MCF 10A (cell line): ENCODE measurements at regions of chr7 and their contacts with region 1.

Region 1: GRCh38 chr7:48109848-48110663 is 21.0 kb downstream of the UPP1 start:
- DNase-seq: peak; percentile 78
- H3K4me3 Mint-ChIP-seq: no peak overlapping the region
- H3K27ac Mint-ChIP-seq: no peak overlapping the region
- H3K4me1 Mint-ChIP-seq: peaks cover 22% of the 10 kb centered on the region
- H3K27me3 Mint-ChIP-seq: no peaks in the 10 kb centered on the region
- CTCF ChIP-seq: peak; percentile 97

Region 2: GRCh38 chr7:47513741-47514241 is 596.3 kb before region 1 on chr7:
- CTCF ChIA-PET with region 1: no interaction called
- POLR2A ChIA-PET with region 1: no interaction called
- intact Hi-C with region 1: no loop called
- DNase-seq: no peak
- H3K4me3 Mint-ChIP-seq: no peak overlapping the region
- H3K27ac Mint-ChIP-seq: no peak overlapping the region
- H3K4me1 Mint-ChIP-seq: no peaks in the 10 kb centered on the region
- H3K27me3 Mint-ChIP-seq: no peaks in the 10 kb centered on the region
- CTCF ChIP-seq: no peak

Region 3: DNA sequence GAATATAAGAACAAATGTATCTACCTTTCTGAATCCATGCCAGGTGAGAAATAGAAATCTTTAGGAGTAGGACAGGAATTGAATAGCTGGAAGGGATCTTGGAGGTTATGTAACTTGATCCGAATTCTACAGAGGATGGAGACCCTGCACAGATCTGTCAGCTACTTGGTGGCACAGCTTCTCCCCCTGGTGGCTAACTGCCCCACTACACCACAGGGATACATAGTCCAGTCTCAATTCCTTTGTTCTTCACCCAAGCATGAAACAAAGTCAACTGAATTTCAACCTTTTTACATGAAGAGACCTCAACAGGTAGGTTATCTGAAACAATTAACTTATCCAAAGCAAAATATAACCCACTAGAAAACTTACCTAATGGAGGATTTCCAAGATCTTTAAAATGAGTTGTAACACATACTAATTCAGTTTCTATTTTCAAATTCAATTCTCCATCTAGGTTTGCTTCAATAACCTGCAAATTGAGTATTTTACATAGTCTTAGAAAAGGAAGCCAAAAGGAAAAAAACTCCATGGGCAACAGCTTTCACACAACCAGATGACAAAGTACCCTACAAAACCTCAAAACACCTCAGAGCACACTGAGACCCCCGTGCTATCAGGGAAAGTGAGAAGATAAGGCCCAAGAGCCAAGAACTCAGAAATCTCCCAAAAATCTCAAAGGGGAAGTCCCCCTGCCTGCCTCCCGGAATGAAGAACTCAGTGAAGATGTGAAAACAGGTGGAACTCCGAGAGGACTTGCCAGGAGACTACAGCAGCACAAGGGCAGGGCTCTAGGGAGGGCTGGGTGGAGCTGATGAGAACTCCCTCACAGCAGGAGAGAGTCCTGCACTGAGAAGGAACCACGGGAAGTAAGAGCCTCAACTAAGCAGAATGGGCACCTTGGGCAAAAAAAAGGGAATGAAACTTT is 140.9 kb before region 1 on chr7:
- CTCF ChIA-PET with region 1: interaction called, 23 read pairs
- POLR2A ChIA-PET with region 1: no interaction called
- intact Hi-C with region 1: no loop called
- DNase-seq: peak; percentile 60
- H3K4me3 Mint-ChIP-seq: no peak overlapping the region
- H3K27ac Mint-ChIP-seq: no peak overlapping the region
- H3K4me1 Mint-ChIP-seq: peaks cover 2% of the 10 kb centered on the region
- H3K27me3 Mint-ChIP-seq: no peaks in the 10 kb centered on the region
- CTCF ChIP-seq: peak; percentile 80

Region 4: DNA sequence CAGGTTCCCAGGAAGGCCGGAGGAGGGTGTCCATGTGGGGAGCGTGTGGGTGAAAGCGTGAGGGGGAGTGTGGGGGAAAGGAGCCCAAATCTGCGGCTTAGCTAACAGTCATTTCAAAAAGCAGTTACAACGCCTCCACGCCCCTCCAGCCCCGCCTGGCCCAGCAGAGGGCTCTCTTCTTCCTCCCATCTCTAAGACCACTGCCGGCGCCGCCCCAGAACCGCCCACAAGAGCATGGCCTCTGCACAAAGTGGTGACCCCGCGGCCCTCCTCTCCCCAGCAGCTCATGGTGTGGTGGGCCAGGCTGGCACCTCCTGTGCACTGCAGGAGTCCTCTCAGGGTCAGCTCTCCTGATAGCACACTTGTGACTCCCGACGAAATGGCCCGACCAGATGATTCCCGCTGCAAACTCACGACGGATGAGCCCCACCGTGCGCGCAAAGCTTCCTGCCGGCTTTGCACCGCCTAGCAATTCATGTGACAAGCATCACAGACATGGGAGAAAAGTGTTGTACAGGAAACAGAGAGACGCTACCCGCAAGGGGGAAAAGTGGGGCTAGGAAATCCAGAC is 118.2 kb before region 1 on chr7:
- CTCF ChIA-PET with region 1: interaction called, 14 read pairs
- POLR2A ChIA-PET with region 1: no interaction called
- intact Hi-C with region 1: loop called (anchors 1 kb)
- DNase-seq: peak; percentile 66
- H3K4me3 Mint-ChIP-seq: no peak overlapping the region
- H3K27ac Mint-ChIP-seq: no peak overlapping the region
- H3K4me1 Mint-ChIP-seq: no peaks in the 10 kb centered on the region
- H3K27me3 Mint-ChIP-seq: no peaks in the 10 kb centered on the region
- CTCF ChIP-seq: peak; percentile 48

Region 5: GRCh38 chr7:48049850-48050249 is 60.2 kb before region 1 on chr7:
- CTCF ChIA-PET with region 1: no interaction called
- POLR2A ChIA-PET with region 1: no interaction called
- intact Hi-C with region 1: no loop called
- DNase-seq: no peak
- H3K4me3 Mint-ChIP-seq: no peak overlapping the region
- H3K27ac Mint-ChIP-seq: no peak overlapping the region
- H3K4me1 Mint-ChIP-seq: peaks cover 8% of the 10 kb centered on the region
- H3K27me3 Mint-ChIP-seq: no peaks in the 10 kb centered on the region
- CTCF ChIP-seq: no peak

Region 6: GRCh38 chr7:48083114-48083830 is 26.8 kb before region 1 on chr7:
- CTCF ChIA-PET with region 1: interaction called, 11 read pairs
- POLR2A ChIA-PET with region 1: interaction called, 10 read pairs
- intact Hi-C with region 1: no loop called
- DNase-seq: peak; percentile 50
- H3K4me3 Mint-ChIP-seq: no peak overlapping the region
- H3K27ac Mint-ChIP-seq: no peak overlapping the region
- H3K4me1 Mint-ChIP-seq: peaks cover 50% of the 10 kb centered on the region
- H3K27me3 Mint-ChIP-seq: no peaks in the 10 kb centered on the region
- CTCF ChIP-seq: no peak

Region 7: GRCh38 chr7:48094751-48095562 is 15.1 kb before region 1 on chr7:
- CTCF ChIA-PET with region 1: interaction called, 26 read pairs
- POLR2A ChIA-PET with region 1: interaction called, 6 read pairs
- intact Hi-C with region 1: no loop called
- DNase-seq: peak; percentile 42
- H3K4me3 Mint-ChIP-seq: peak overlapping the region; percentile 17
- H3K27ac Mint-ChIP-seq: peak overlapping the region; percentile 87
- H3K4me1 Mint-ChIP-seq: peaks cover 63% of the 10 kb centered on the region
- H3K27me3 Mint-ChIP-seq: no peaks in the 10 kb centered on the region
- CTCF ChIP-seq: no peak

Region 8: DNA sequence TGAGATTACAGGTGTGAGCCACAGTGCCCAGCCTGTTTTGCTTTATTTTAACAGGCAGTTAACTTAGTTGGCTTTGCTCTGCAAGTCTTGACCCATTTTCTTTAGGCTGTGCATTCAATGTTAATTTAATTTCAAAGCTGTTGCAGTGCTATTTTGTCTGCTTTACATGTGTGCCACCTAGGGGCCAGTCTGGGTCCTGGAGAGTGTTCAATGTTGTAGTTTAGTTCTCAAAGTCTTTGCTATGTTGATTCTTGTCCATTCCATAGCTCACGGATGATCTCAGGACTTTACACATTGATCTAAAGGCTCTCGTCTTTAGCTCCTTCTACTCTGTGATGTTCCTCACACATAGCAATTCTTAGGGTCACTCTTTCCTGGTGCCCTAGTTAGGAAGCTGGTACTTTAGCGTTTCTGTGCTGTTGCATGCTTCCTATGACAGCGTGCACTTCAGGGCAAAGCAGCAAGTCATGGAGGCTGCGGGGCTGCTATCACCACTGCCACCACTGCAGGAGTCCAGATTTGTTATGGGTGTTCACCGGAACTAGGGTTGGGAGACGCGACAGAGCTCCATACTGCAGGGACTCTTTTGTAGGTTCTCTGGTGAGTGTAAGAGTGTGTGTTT is 44.8 kb after region 1 on chr7:
- CTCF ChIA-PET with region 1: interaction called, 14 read pairs
- POLR2A ChIA-PET with region 1: interaction called, 3 read pairs
- intact Hi-C with region 1: loop called (anchors 1 kb)
- DNase-seq: peak; percentile 59
- H3K4me3 Mint-ChIP-seq: no peak overlapping the region
- H3K27ac Mint-ChIP-seq: no peak overlapping the region
- H3K4me1 Mint-ChIP-seq: no peaks in the 10 kb centered on the region
- H3K27me3 Mint-ChIP-seq: peaks cover 47% of the 10 kb centered on the region
- CTCF ChIP-seq: peak; percentile 79

Region 9: GRCh38 chr7:48182718-48183369 is 72.8 kb after region 1 on chr7:
- CTCF ChIA-PET with region 1: no interaction called
- POLR2A ChIA-PET with region 1: no interaction called
- intact Hi-C with region 1: no loop called
- DNase-seq: peak; percentile 25
- H3K4me3 Mint-ChIP-seq: no peak overlapping the region
- H3K27ac Mint-ChIP-seq: peak overlapping the region; percentile 52
- H3K4me1 Mint-ChIP-seq: peaks cover 17% of the 10 kb centered on the region
- H3K27me3 Mint-ChIP-seq: peaks cover 5% of the 10 kb centered on the region
- CTCF ChIP-seq: no peak

Region 10: GRCh38 chr7:48321319-48322010 is 211.4 kb after region 1 on chr7:
- CTCF ChIA-PET with region 1: no interaction called
- POLR2A ChIA-PET with region 1: no interaction called
- intact Hi-C with region 1: no loop called
- DNase-seq: no peak
- H3K4me3 Mint-ChIP-seq: no peak overlapping the region
- H3K27ac Mint-ChIP-seq: no peak overlapping the region
- H3K4me1 Mint-ChIP-seq: no peaks in the 10 kb centered on the region
- H3K27me3 Mint-ChIP-seq: no peaks in the 10 kb centered on the region
- CTCF ChIP-seq: no peak